ENCODE measurements at regions of chrX and their contacts with region 1.

Region 1: DNA sequence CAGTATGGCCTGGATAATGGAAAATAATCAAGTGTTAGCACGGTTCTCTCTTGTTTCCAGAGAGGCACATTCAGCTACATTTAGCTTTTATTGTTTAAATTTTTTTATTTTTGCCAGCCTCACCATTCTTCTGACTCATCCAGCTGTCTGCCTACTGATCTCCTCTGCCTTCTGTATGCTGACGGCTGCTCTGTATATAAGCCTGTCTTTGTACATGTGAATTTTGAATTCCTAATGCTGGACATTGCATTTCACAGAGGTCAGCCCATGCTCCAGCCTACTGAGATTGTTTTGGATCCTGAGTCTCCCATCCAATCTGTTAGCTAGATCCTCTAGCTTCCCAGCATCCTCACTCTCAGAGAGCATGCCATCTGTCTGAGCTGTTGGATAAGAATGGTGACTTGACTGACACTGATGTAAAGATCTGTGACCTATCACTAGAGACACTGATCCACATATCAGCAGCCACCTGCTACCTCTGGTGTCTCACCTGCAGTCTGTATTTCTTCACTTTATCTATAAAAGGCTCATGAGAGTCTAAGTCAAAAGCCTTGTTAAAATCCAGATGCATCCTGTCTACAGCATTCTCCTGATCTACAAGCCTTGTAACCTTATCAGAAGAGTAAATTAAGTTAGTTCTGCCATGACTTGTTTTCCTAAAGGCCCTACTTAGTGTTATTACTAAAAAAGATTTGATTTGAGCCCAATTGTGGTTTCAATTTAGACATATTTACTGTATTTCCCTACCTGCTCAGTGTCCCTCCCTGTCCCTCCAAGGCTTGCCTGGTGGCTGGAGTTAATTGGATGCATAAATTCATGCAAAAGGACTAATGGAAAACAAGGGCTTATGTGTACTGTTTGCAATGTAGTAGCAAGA is 25.6 kb upstream of the ARHGAP36 start:
- DNase-seq: no peak
- H3K4me3 ChIP-seq: no peak overlapping the region
- CTCF ChIP-seq: no peak

Region 2: GRCh38 chrX:130975947-130976346 is 56.6 kb before region 1 on chrX:
- in situ Hi-C with region 1: no loop called
- DNase-seq: peak; percentile 36
- H3K4me3 ChIP-seq: no peak overlapping the region
- CTCF ChIP-seq: peak; percentile 58

Region 3: GRCh38 chrX:131082325-131082740 is 49.7 kb after region 1 on chrX:
- in situ Hi-C with region 1: loop called (anchors 5 kb)
- DNase-seq: no peak
- H3K4me3 ChIP-seq: no peak overlapping the region
- CTCF ChIP-seq: no peak